Right ventricle myocardium inferior (tissue), 1 donor: ENCODE measurements at regions of chr17 and their contacts with region 1.

Region 1: GRCh38 chr17:65561394-65562205 is at the start of gene AXIN2:
- DNase-seq: peak; percentile 94
- ATAC-seq: peak; percentile 89
- total RNA-seq, gene AXIN2: 22.2 TPM

Region 2: GRCh38 chr17:65584604-65585541 is 23.3 kb after region 1 on chr17:
- intact Hi-C with region 1: loop called (anchors 2 kb)
- DNase-seq: no peak
- ATAC-seq: peak; percentile 64

Region 3: GRCh38 chr17:65730711-65731169 is 169.1 kb after region 1 on chr17:
- intact Hi-C with region 1: loop called (anchors 5 kb)
- DNase-seq: no peak
- ATAC-seq: peak; percentile 72